Tibial artery (tissue), 4 donors: ENCODE measurements at regions of chr1 and their contacts with region 1.

Region 1: DNA sequence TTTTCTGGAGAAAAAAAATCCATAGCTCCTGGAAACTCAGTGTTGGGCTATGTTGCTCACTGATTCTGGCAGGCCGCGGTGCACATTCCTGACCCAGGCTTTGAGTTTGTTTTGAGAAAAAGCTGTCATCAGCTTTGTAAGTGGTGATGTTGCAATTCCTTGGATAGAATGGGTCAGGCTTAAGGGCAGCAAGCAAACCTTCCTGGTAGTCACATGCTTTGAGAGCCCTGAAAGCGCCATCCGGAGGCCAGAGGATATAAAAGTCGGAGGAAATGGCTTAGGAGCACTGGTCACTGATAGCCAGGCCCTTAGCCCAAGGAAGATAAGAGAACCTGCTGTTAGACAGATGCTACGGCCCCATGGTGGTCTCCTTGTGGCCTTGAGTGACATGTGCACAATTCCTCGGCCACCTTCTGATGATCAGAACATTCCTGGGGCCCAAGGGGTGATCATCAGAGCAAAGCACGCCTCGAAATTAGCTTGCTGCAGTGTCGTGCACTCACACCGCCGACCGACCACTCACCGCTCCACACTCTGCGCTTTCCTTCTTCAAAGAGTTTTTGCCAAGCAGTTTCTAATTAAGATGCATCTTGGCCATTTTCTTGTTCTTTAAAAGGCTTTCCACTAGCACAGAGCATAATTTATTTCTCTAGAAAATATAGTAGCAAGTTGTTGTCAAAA is 78.6 kb downstream of the MAN1C1 start:
- DNase-seq: peak; percentile 92 to 95
- H3K4me3 ChIP-seq: peak overlapping the region in 1 of 2 donors; percentile 2
- H3K27ac ChIP-seq: peak overlapping the region; percentile 78 to 80
- H3K4me1 ChIP-seq: peaks cover 0 to 70% (median 57%) of the 10 kb centered on the region in 4 donors
- H3K27me3 ChIP-seq: no peaks in the 10 kb centered on the region
- CTCF ChIP-seq: peak; percentile 15 to 16

Region 2: DNA sequence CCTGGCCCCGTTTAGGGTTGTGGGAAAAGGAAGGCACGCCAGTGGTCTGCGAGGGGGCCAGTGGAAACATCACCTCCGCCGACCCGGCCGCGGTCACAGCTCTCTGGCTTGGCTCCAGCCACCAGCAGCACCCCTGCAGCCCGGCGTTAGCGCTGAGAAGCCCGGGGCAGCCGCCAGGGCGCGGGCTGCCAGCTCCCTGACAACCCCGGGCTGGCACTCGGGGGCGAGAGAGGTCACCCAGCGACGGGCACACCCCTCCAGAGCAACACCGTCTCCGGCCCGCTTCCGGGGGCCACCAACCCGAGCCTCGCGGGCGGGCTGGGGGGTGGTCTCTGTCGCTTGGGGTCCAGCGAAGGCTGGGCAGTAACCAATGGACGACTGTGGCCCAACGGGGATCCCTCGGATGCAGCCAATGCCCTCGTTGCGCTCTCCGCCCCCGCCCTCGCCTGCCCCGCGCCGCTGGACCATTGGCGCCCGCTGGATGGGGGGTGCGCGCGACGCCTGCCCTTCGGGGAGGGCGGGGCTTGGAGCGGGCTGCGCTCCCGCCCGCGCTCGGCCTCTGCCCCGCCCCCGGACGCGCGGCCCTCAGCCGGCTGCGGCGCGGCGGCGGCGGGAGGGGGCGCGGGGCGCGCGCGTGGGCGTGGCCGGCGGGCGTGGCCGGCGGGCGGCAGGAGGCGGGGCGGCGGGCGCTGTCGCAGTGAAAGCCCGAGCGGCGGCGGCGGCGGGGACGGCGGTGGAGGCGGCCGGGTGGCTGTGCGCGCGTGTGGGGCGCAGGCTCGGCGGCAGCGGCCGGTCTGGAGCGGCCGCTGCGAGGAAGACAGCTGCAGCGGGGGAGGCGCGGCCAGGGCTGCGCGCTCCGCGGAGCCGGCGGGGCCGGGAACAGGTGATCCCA is 78.9 kb before region 1 on chr1 and contains the start of gene MAN1C1:
- intact Hi-C with region 1: loop called (anchors 2 kb)
- DNase-seq: peak; percentile 83 to 95
- H3K4me3 ChIP-seq: peak within 1 kb of the TSS; percentile 78 to 94
- H3K27ac ChIP-seq: peak within 1 kb of the TSS; percentile 82
- H3K4me1 ChIP-seq: peaks cover 0 to 48% (median 28%) of the 10 kb centered on the region in 4 donors
- H3K27me3 ChIP-seq: no peaks in the 10 kb centered on the region
- CTCF ChIP-seq: peak; percentile 45 to 63

Region 3: GRCh38 chr1:25743826-25744581 is 48.8 kb after region 1 on chr1:
- intact Hi-C with region 1: loop called (anchors 5 kb)
- DNase-seq: peak; percentile 85 to 93
- H3K4me3 ChIP-seq: no peak overlapping the region
- H3K27ac ChIP-seq: peak overlapping the region; percentile 81 to 89
- H3K4me1 ChIP-seq: peaks cover 7 to 33% (median 29%) of the 10 kb centered on the region in 4 donors
- H3K27me3 ChIP-seq: no peaks in the 10 kb centered on the region
- CTCF ChIP-seq: peak; percentile 55 to 64

Region 4: GRCh38 chr1:25796811-25797458 is 101.7 kb after region 1 on chr1:
- intact Hi-C with region 1: loop called (anchors 5 kb)
- DNase-seq: peak; percentile 88 to 89
- H3K4me3 ChIP-seq: no peak overlapping the region
- H3K27ac ChIP-seq: peak overlapping the region in 1 of 2 donors; percentile 20
- H3K4me1 ChIP-seq: peaks cover 0 to 34% (median 29%) of the 10 kb centered on the region in 4 donors
- H3K27me3 ChIP-seq: no peaks in the 10 kb centered on the region
- CTCF ChIP-seq: peak; percentile 69 to 84